ENCODE measurements at regions of chr6 and their contacts with region 1.

Region 1: DNA sequence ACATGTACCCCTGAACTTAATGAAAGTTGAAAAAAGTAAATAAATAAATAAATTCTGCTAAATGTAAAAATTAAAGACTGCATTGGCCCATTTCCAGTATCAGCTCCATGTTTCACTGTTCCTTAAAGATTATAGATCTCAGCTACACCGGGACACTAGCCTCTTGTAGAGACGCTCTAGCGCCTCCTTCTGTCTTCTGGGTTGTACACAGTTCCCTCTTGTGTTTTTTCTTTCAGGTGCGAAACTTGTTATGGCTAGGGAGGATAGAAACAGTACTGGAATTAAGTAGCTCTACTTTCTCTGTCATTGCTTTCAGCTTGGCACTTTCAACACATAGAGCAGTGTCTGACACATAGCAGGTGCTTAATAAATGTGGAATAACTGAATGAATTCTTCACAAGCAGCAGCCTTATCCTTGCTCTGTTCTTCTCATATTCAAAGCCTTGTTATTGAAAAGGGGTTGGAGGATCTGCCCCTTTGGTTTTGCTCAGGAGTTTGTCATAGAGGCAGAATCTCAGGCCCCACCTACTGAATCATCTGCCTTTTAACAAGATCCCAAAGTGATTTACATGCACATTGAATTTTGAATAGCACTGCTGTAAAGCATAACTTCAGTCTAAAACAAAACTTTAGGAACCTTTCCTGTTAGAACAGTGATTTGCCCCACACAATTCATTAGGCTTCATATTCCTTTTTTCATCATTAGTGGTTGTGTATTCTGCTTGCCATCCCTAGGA is 92.3 kb downstream of the FIG4 start:
- DNase-seq: no peak
- H3K4me3 ChIP-seq: no peak overlapping the region
- CTCF ChIP-seq: peak; percentile 15

Region 2: GRCh38 chr6:109772961-109773431 is 10.4 kb before region 1 on chr6:
- CTCF ChIA-PET with region 1: interaction called, 10 read pairs
- POLR2A ChIA-PET with region 1: interaction called, 3 read pairs
- DNase-seq: peak; percentile 67
- H3K4me3 ChIP-seq: no peak overlapping the region
- CTCF ChIP-seq: no peak

Measured in AG04449 (cell line).